ENCODE measurements at regions of chr19 and their contacts with region 1.

Region 1: GRCh38 chr19:48646001-48646721 is at the start of gene CA11:
- DNase-seq: peak; percentile 93
- ATAC-seq: peak; percentile 90
- H3K4me3 Mint-ChIP-seq: peak within 1 kb of the TSS; percentile 79
- H3K27ac Mint-ChIP-seq: peak within 1 kb of the TSS; percentile 76
- H3K4me1 Mint-ChIP-seq: peaks cover 46% of the 10 kb centered on the region
- H3K27me3 Mint-ChIP-seq: no peaks in the 10 kb centered on the region
- total RNA-seq, gene CA11: 5.2 to 6.3 TPM

Region 2: DNA sequence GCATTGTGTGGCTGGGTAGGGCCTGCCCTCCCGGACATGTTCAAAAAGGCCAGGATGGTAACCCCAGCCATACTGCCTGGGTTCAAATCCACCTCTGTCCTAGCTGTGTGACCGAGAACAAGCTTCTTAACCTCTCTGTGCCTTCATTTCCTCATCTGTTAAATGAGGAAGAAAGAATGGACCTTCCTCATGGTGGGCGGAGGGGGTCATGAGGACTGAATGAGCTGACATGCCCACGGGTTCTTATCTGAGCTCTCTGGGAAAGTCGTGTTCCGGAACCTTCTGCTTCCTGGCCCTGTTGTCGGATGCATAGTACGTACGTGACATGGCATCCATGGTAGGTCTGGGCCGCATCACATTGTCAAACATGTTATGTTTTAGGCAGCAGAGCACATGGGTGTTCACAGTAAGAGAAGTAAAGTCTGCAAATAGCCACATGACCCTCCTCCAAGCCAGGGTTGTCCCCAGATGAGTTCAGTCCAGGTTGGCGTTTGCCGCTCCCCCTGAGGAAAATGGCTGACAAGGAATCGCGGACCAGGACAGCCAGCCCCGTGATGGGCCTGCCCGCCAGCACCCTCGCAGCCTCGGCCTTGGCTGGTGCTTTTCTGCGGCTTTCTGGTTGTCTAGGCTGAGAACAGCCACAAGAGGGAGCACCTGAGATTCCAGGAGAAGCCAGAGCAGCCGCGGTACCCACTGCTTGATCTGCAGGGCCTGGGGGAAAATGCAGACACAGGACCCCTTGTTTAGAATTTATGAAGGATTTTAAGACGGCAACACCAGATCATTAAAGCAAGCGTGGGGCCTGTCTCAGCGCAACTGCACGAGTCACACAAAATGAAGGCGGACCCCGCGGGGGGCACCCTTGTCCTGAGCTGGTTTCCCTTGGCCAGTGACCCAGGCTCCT is 29.0 kb after region 1 on chr19:
- CTCF ChIA-PET with region 1: interaction called, 36 read pairs
- POLR2A ChIA-PET with region 1: interaction called, 3 read pairs
- DNase-seq: peak; percentile 84
- ATAC-seq: peak; percentile 94
- H3K4me3 Mint-ChIP-seq: no peak overlapping the region
- H3K27ac Mint-ChIP-seq: no peak overlapping the region
- H3K4me1 Mint-ChIP-seq: peaks cover 6% of the 10 kb centered on the region
- H3K27me3 Mint-ChIP-seq: no peaks in the 10 kb centered on the region

Region 3: GRCh38 chr19:48696353-48697010 is 50.3 kb after region 1 on chr19:
- CTCF ChIA-PET with region 1: no interaction called
- POLR2A ChIA-PET with region 1: no interaction called
- DNase-seq: no peak
- ATAC-seq: peak; percentile 49
- H3K4me3 Mint-ChIP-seq: no peak overlapping the region
- H3K27ac Mint-ChIP-seq: no peak overlapping the region
- H3K4me1 Mint-ChIP-seq: peaks cover 5% of the 10 kb centered on the region
- H3K27me3 Mint-ChIP-seq: peaks cover 14% of the 10 kb centered on the region

Region 4: GRCh38 chr19:48770260-48770659 is 124.1 kb after region 1 on chr19:
- CTCF ChIA-PET with region 1: no interaction called
- POLR2A ChIA-PET with region 1: no interaction called
- DNase-seq: no peak
- ATAC-seq: no peak
- H3K4me3 Mint-ChIP-seq: no peak overlapping the region
- H3K27ac Mint-ChIP-seq: no peak overlapping the region
- H3K4me1 Mint-ChIP-seq: no peaks in the 10 kb centered on the region
- H3K27me3 Mint-ChIP-seq: peaks cover 20% of the 10 kb centered on the region